ENCODE measurements at regions of chrX and their contacts with region 1.

Region 1: DNA sequence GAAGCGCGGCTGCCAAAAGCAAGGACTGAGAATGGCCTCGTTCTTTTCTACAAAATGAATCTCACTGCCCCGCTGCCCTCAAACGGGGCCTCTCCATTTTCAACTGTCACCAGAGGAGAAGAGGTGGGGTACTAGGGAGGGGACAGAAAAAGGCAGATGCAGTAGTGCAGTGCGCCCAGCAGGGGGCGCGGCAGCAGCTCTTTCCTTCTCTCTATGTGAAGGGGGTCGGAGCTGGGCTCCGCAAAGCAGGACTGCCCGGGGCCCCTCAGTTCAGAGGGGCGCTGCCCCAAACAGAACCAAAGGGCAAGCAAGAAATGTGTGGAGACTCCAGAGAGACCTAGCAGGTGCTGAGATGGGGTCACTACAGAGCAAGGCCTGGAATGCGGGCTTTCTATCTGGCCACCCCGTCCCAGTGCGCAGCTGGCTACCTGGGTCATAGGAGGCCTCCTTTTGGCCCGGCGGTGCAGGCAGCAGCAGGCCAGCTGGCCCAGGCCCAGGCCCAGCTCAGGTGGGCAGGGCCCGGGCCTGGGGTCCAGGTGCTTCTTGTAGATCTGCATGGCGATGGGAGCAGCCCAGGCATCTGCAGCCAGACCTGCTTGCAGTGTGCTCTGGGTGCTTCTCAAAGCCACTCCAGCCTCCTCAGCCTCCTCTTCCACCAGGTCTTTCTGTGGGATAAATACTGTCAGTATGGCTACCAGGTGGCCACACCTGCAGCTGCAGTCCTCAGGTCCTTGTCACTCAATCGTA is 5.9 kb downstream of the IRAK1 start:
- DNase-seq: no peak
- H3K4me3 ChIP-seq: no peak overlapping the region
- H3K27ac ChIP-seq: no peak overlapping the region
- H3K27me3 ChIP-seq: no peaks in the 10 kb centered on the region
- CTCF ChIP-seq: peak; percentile 79

Region 2: DNA sequence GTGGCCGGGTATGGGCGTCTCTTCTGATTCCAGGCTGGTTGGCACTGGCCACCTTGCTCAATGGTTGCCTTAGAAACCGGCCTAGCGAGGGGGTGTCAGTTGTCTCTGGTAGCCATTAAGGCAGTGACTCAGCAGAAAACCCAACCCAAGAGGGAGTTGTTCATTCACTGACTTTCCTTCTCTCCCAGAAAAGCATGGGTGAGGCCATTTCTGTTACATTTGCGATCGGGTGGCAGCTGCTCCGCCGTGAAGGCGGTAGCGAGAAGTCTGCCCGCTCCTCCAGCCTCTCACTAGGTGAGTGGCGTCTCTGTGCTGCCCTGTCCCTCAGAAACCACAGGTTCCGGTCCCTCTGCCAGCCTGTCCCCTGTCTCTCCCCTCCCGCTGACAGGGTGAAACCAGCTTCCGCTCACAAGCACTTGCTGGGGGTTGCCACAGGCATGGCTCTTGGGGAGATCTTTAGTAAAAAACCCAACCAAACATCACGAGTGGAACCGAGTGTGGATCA is 11.5 kb before region 1 on chrX:
- CTCF ChIA-PET with region 1: interaction called, 10 read pairs
- POLR2A ChIA-PET with region 1: no interaction called
- DNase-seq: no peak
- H3K4me3 ChIP-seq: no peak overlapping the region
- H3K27ac ChIP-seq: peak overlapping the region; percentile 52
- H3K27me3 ChIP-seq: no peaks in the 10 kb centered on the region
- CTCF ChIP-seq: no peak

Measured in AG04450 (cell line).